ENCODE measurements at regions of chr4 and their contacts with region 1.

Region 1: DNA sequence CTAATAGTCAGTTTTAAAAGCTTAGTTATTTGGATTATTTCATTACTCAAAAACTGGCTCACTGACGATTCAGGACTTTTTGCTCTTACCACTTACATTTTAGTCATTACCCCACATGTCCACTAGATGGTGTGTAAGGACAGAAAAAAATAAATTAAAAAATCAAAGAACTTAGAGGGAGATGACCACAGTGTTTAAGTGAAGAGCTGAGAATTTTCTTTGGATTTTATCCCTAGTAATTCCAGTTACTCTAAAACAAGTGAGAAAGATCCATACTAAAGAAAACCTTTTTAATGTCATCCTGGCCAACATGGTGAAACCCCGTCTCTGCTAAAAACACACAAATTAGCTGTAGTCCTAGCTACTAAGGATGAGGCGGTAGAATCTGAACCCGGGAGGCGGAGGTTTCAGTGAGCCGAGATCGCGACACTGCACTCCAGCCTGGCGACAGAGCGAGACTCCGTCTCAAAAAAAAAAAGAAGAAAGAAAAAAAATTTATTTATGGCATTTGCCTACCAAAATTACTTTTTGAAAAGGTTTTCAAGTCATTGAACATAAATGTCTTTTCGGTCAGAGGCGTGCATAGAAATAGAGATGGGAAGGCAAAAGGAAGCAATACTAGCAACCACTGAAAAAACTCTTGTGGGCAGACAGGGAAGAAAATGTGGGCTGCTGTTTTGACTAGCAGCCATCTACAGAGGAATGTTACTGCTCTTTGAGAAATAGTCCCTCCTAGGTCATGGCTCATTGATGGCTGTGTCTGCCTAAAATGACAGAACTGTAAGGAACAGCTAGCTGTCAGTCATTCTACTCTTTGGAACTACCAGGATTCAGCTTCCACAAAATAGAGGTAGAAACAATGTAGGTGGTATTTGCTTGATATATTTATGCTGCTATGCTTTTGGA is 26.6 kb upstream of the TMPRSS11B start:
- ATAC-seq: peak in 6 of 8 experiments; percentile 44 to 88 (median 62)
- H3K4me3 ChIP-seq: peak overlapping the region in 2 of 5 donors; percentile 11 to 19
- H3K27ac ChIP-seq: no peak overlapping the region
- H3K4me1 ChIP-seq: peaks cover 4 to 5% of the 10 kb centered on the region in 2 donors

Region 2: GRCh38 chr4:68152411-68152810 is 119.7 kb before region 1 on chr4:
- in situ Hi-C with region 1: no loop called
- ATAC-seq: peak in 5 of 8 experiments; percentile 73 to 82 (median 76)
- H3K4me3 ChIP-seq: no peak overlapping the region
- H3K27ac ChIP-seq: no peak overlapping the region
- H3K4me1 ChIP-seq: no peaks in the 10 kb centered on the region

Region 3: GRCh38 chr4:68375667-68376559 is 103.8 kb after region 1 on chr4:
- in situ Hi-C with region 1: loop called in 2 of 9 experiments (anchors 10 to 25 kb)
- ATAC-seq: peak; percentile 50 to 80 (median 63)
- H3K4me3 ChIP-seq: no peak overlapping the region
- H3K27ac ChIP-seq: no peak overlapping the region
- H3K4me1 ChIP-seq: peaks cover 3 to 6% of the 10 kb centered on the region in 2 donors

Measured in motor neuron (in vitro differentiated cells).